Spleen (tissue), 13 donors: ENCODE measurements at regions of chr2 and their contacts with region 1.

Region 1: GRCh38 chr2:54657664-54658083 is 65.8 kb upstream of the EML6 start:
- DNase-seq: peak; percentile 80
- H3K4me3 ChIP-seq: no peak overlapping the region
- H3K27ac ChIP-seq: peak overlapping the region in 6 of 8 donors; percentile 10 to 39 (median 24)
- H3K4me1 ChIP-seq: peaks cover 0 to 16% (median 5%) of the 10 kb centered on the region in 6 donors
- H3K27me3 ChIP-seq: no peaks in the 10 kb centered on the region
- CTCF ChIP-seq: peak in 10 of 11 experiments; percentile 15 to 69 (median 54)
- POLR2A ChIP-seq: no peak

Region 2: DNA sequence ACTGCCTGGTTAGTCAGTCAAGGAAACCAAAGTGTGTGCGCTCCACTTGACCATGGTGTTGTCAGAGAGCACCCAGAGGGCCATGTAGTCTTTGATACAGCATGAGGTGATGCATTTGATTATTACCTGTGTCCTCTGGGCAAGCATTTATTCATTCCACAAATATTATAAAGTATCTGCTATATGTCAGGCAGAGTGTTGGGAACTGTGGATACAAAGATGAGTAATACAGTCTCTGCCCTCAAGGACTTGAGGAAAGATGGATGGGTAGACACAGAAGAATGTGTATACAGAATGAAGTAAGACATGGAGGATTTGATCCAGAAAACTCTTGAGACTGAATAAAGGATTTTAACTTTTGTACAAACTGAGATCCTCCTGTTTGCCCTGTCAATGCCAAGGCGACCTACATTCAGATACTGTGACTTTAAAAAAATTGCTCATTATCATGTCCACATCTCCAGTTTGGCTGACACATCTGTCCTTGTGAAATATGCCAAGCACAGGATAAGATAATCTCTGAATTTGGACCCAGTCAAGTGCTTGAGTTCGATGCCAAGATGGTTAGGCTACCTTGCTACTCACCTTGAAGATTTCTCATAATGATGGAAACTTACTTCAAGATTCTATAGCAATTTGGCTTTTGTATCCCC is 491.4 kb before region 1 on chr2:
- intact Hi-C with region 1: no loop called
- DNase-seq: no peak
- H3K4me3 ChIP-seq: no peak overlapping the region
- H3K27ac ChIP-seq: no peak overlapping the region
- H3K4me1 ChIP-seq: no peaks in the 10 kb centered on the region
- H3K27me3 ChIP-seq: no peaks in the 10 kb centered on the region
- CTCF ChIP-seq: no peak
- POLR2A ChIP-seq: no peak

Region 3: GRCh38 chr2:54522624-54523281 is 134.9 kb before region 1 on chr2:
- intact Hi-C with region 1: loop called (anchors 10 kb)
- DNase-seq: peak; percentile 80
- H3K4me3 ChIP-seq: no peak overlapping the region
- H3K27ac ChIP-seq: peak overlapping the region in 2 of 8 donors; percentile 3 to 9
- H3K4me1 ChIP-seq: peaks cover 0 to 39% (median 26%) of the 10 kb centered on the region in 6 donors
- H3K27me3 ChIP-seq: no peaks in the 10 kb centered on the region
- CTCF ChIP-seq: peak; percentile 58 to 88 (median 81)
- POLR2A ChIP-seq: no peak